ENCODE measurements at regions of chr4 and their contacts with region 1.

Region 1: DNA sequence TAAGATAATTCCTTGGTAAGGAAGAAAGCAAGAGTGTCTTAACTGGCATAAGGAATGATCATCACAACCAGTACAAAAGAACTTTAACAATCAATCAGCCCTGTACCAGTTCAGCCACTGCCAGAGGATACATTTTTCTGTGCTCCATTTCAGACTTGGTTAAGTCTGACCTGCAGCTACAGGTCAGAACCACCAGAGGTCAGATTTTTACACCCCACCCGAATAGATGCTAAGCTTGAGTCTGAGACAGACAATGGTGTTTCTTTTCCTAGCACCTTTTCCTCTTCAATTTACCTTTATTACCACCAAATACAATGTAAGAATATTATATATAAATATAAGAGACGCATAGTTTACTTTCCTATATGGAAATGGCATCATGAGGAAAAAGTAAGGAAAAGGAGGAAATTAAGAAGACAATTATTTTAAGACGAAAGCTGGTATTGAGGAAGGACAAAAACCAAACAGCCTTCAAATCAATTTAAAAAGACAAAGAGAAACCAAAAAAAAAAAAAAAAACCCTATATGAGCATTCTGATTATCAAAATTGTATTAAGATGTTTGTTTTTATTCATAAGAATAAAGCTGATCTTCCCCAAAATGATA is 215.3 kb upstream of the TTC29 start:
- DNase-seq: no peak
- ATAC-seq: peak; percentile 69
- H3K4me3 Mint-ChIP-seq: no peak overlapping the region
- H3K27ac Mint-ChIP-seq: no peak overlapping the region
- H3K4me1 Mint-ChIP-seq: peaks cover 16% of the 10 kb centered on the region
- H3K27me3 Mint-ChIP-seq: no peaks in the 10 kb centered on the region
- CTCF ChIP-seq: peak; percentile 63

Region 2: DNA sequence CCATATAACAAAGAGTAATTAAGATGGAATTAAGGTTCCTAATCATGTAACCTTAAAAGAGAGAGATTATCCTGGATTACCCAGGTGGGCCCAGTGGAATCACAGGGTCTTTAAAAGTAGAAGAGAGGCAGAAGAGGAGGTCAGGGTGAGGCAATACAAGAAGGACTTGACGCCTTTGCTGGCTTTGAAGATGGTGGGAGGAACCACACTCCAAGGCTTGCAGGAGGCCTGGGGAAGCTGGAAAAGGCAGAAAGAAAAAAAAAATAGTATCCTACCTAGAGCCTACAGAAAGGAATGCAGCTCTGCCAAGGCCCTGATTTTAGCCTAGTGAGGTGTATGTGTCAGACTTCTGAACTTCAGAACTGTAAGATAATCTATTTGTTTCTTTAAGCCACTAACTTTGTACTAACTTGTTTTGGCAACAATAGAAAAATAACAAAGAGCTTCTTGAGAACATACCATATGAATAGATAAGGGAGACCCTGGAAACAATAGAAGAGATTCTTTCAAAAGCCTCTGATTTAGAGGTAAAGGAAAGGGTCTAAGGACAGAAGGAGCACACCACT is 14.5 kb after region 1 on chr4:
- CTCF ChIA-PET with region 1: interaction called, 11 read pairs
- POLR2A ChIA-PET with region 1: no interaction called
- DNase-seq: no peak
- ATAC-seq: peak; percentile 28; the same call in 1 of the 2 replicates
- H3K4me3 Mint-ChIP-seq: no peak overlapping the region
- H3K27ac Mint-ChIP-seq: no peak overlapping the region
- H3K4me1 Mint-ChIP-seq: peaks cover 7% of the 10 kb centered on the region
- H3K27me3 Mint-ChIP-seq: no peaks in the 10 kb centered on the region
- CTCF ChIP-seq: no peak

Region 3: GRCh38 chr4:147378779-147379178 is 217.8 kb after region 1 on chr4:
- CTCF ChIA-PET with region 1: interaction called, 22 read pairs
- POLR2A ChIA-PET with region 1: no interaction called
- DNase-seq: no peak
- ATAC-seq: peak; percentile 98
- H3K4me3 Mint-ChIP-seq: no peak overlapping the region
- H3K27ac Mint-ChIP-seq: peak overlapping the region; percentile 46; the same call in 1 of the 2 replicates
- H3K4me1 Mint-ChIP-seq: peaks cover 13% of the 10 kb centered on the region
- H3K27me3 Mint-ChIP-seq: no peaks in the 10 kb centered on the region; the same call in 1 of the 2 replicates
- CTCF ChIP-seq: no peak

Region 4: DNA sequence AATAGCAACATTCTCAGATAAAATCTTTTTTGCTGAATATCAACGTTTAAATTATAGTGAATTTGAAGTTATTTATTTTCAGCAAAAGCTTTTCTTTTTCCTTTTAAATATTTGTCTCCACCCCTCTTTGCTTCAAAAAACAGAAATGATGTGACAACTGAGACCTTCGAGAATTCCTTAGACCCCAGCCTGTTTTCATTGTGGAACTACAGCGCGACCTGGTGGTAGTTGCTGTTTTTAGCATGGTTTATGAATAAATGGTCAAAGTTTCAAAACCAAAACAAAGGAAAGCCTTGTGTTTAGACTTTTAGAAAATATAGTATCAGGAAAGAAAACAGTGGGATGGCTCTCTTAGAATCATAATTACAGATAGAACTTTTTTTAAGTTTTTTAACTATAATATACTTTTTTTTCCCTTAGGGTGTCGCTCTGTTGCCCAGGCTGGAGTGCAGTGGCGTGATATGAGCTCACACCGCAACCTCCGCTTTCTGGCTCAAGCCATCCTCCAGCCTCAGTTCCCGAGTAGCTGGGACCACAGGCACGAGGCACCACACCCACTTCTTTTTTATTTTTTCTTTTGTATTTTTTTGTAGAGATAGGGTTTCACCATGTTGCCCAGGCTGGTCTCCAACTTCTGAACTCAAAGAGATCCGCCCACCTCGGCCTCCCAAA is 429.4 kb after region 1 on chr4:
- CTCF ChIA-PET with region 1: interaction called, 21 read pairs
- POLR2A ChIA-PET with region 1: no interaction called
- DNase-seq: peak; percentile 70
- ATAC-seq: peak; percentile 72
- H3K4me3 Mint-ChIP-seq: no peak overlapping the region
- H3K27ac Mint-ChIP-seq: no peak overlapping the region
- H3K4me1 Mint-ChIP-seq: peaks cover 23% of the 10 kb centered on the region
- H3K27me3 Mint-ChIP-seq: no peaks in the 10 kb centered on the region
- CTCF ChIP-seq: peak; percentile 51